ENCODE measurements at regions of chr13 and their contacts with region 1.

Region 1: DNA sequence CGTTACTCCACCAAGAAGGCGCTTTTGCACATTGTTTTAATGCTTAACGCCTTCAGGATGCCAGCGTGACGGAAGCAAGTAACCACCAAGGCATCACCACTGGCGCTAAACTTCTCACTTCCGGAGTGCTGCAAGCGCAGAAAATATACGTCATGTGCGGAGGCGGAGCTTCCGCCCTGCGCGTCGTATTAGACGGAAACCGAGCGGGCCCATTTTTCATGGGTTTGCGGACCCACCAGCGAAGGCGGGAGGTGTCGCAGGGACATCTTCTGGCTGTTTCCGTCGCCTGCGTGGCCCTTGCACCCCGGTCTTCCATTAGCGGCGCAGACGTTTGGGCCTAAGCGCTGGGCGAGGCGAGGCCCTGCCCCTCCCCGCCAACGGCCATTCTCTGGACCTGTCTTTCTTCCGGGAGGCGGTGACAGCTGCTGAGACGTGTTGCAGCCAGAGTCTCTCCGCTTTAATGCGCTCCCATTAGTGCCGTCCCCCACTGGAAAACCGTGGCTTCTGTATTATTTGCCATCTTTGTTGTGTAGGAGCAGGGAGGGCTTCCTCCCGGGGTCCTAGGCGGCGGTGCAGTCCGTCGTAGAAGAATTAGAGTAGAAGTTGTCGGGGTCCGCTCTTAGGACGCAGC is at the start of gene ERCC5:
- DNase-seq: peak; percentile 72
- CTCF ChIP-seq: peak; percentile 42

Region 2: GRCh38 chr13:102596147-102597028 is 249.4 kb before region 1 on chr13 and contains the start of gene TPP2:
- in situ Hi-C with region 1: loop called (anchors 10 kb)
- DNase-seq: peak; percentile 97
- CTCF ChIP-seq: no peak